CD8-positive, alpha-beta memory T cell (primary cell): ENCODE measurements at regions of chr9 and their contacts with region 1.

Region 1: GRCh38 chr9:75088260-75088905 is at the start of gene OSTF1:
- DNase-seq: peak; percentile 90 to 96 (median 95)
- H3K4me3 ChIP-seq: peak within 1 kb of the TSS; percentile 89
- H3K4me3 Mint-ChIP-seq: peak within 1 kb of the TSS; percentile 92 to 100 (median 99)
- H3K27ac ChIP-seq: peak within 1 kb of the TSS; percentile 95
- H3K27ac Mint-ChIP-seq: peak within 1 kb of the TSS; percentile 95 to 99 (median 98)
- H3K4me1 ChIP-seq: peaks cover 61% of the 10 kb centered on the region
- H3K4me1 Mint-ChIP-seq: peaks cover 64 to 83% (median 78%) of the 10 kb centered on the region in 3 donors
- H3K27me3 ChIP-seq: no peaks in the 10 kb centered on the region
- H3K27me3 Mint-ChIP-seq: no peaks in the 10 kb centered on the region
- total RNA-seq, gene OSTF1: 71.9 to 76.0 TPM

Region 2: GRCh38 chr9:74543145-74543544 is 545.2 kb before region 1 on chr9:
- CTCF ChIA-PET with region 1: no interaction called
- POLR2A ChIA-PET with region 1: no interaction called
- DNase-seq: no peak
- H3K4me3 ChIP-seq: no peak overlapping the region
- H3K4me3 Mint-ChIP-seq: no peak overlapping the region
- H3K27ac ChIP-seq: no peak overlapping the region
- H3K27ac Mint-ChIP-seq: no peak overlapping the region
- H3K4me1 ChIP-seq: no peaks in the 10 kb centered on the region
- H3K4me1 Mint-ChIP-seq: no peaks in the 10 kb centered on the region
- H3K27me3 ChIP-seq: no peaks in the 10 kb centered on the region
- H3K27me3 Mint-ChIP-seq: no peaks in the 10 kb centered on the region

Region 3: GRCh38 chr9:75027187-75028107 is 60.9 kb before region 1 on chr9:
- CTCF ChIA-PET with region 1: interaction called, 20 read pairs
- POLR2A ChIA-PET with region 1: interaction called, 53 read pairs
- DNase-seq: peak in 4 of 5 donors; percentile 27 to 68 (median 44)
- H3K4me3 ChIP-seq: peak overlapping the region; percentile 87
- H3K4me3 Mint-ChIP-seq: peak overlapping the region; percentile 84 to 98 (median 98)
- H3K27ac ChIP-seq: peak overlapping the region; percentile 75
- H3K27ac Mint-ChIP-seq: peak overlapping the region; percentile 77 to 98 (median 96)
- H3K4me1 ChIP-seq: peaks cover 35% of the 10 kb centered on the region
- H3K4me1 Mint-ChIP-seq: peaks cover 46 to 55% (median 54%) of the 10 kb centered on the region in 3 donors
- H3K27me3 ChIP-seq: no peaks in the 10 kb centered on the region
- H3K27me3 Mint-ChIP-seq: no peaks in the 10 kb centered on the region

Region 4: DNA sequence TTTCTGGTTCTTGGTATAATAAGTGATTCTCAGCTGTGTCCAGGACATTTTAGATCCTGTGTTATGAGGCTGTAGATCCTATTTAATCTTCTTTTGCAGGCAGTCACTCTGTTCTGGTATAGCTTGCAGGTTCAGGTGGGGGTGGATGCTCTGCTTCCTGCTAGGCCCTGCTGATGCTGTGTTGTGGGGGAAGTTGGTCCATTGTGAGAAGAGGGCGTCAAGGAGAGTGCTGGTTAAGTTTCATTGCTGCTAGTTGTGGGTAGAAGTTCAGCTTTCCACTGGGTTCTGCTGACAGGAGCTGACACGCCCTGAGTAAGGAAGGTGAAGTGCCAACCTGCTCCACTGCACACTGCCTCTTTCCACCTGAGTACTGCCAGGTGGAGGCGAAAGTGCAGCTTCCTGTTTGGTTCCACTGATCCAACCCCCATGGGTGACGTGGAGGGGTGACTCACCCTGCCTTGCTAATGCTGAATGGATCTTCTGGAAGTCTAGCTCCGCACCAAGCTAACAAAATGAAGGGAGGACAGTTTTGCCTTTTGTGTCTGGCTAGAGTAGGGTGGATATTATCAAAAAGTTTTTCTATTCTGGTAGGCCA is 16.8 kb before region 1 on chr9:
- CTCF ChIA-PET with region 1: no interaction called
- POLR2A ChIA-PET with region 1: no interaction called
- DNase-seq: peak in 4 of 5 donors; percentile 16 to 68 (median 25)
- H3K4me3 ChIP-seq: no peak overlapping the region
- H3K4me3 Mint-ChIP-seq: no peak overlapping the region
- H3K27ac ChIP-seq: no peak overlapping the region
- H3K27ac Mint-ChIP-seq: peak overlapping the region in 6 of 8 donors; percentile 15 to 91 (median 52)
- H3K4me1 ChIP-seq: peaks cover 7% of the 10 kb centered on the region
- H3K4me1 Mint-ChIP-seq: peaks cover 13 to 15% (median 15%) of the 10 kb centered on the region in 3 donors
- H3K27me3 ChIP-seq: no peaks in the 10 kb centered on the region
- H3K27me3 Mint-ChIP-seq: no peaks in the 10 kb centered on the region

Region 5: GRCh38 chr9:75152416-75152815 is 64.0 kb after region 1 on chr9:
- CTCF ChIA-PET with region 1: interaction called, 5 read pairs
- POLR2A ChIA-PET with region 1: interaction called, 11 read pairs
- DNase-seq: peak; percentile 22 to 69 (median 45)
- H3K4me3 ChIP-seq: peak overlapping the region; percentile 20
- H3K4me3 Mint-ChIP-seq: peak overlapping the region in 6 of 7 donors; percentile 67 to 77 (median 73)
- H3K27ac ChIP-seq: no peak overlapping the region
- H3K27ac Mint-ChIP-seq: peak overlapping the region; percentile 79 to 98 (median 90)
- H3K4me1 ChIP-seq: peaks cover 88% of the 10 kb centered on the region
- H3K4me1 Mint-ChIP-seq: peaks cover 69 to 87% (median 85%) of the 10 kb centered on the region in 3 donors
- H3K27me3 ChIP-seq: no peaks in the 10 kb centered on the region
- H3K27me3 Mint-ChIP-seq: no peaks in the 10 kb centered on the region

Region 6: DNA sequence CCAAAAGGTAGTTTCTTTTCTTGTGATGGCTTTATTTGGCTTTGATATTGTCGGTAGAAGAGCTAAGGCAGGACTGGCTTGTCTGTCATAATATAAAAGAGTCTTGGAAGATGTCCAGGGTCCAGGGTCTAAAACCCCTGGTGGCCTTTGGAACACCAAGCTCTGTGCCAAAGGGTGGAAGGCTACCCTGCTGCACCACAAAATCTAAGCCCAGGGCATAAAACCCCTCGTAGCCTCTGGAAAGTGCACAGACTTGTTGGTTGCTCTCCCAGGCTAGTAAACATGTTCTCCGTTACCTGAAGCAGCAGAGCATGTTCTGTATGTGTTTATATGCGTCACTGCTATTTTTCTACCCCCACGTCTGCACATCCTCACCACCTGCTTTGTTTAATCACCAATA is 75.4 kb after region 1 on chr9:
- CTCF ChIA-PET with region 1: no interaction called
- POLR2A ChIA-PET with region 1: no interaction called
- DNase-seq: no peak
- H3K4me3 ChIP-seq: no peak overlapping the region
- H3K4me3 Mint-ChIP-seq: no peak overlapping the region
- H3K27ac ChIP-seq: no peak overlapping the region
- H3K27ac Mint-ChIP-seq: peak overlapping the region in 2 of 8 donors; percentile 58 to 64
- H3K4me1 ChIP-seq: peaks cover 7% of the 10 kb centered on the region
- H3K4me1 Mint-ChIP-seq: peaks cover 14 to 25% (median 17%) of the 10 kb centered on the region in 3 donors
- H3K27me3 ChIP-seq: no peaks in the 10 kb centered on the region
- H3K27me3 Mint-ChIP-seq: no peaks in the 10 kb centered on the region